ENCODE measurements at regions of chr6 and their contacts with region 1.

Region 1: GRCh38 chr6:45558858-45559257 is 181.1 kb upstream of the SUPT3H start:
- DNase-seq: no peak
- ATAC-seq: peak; percentile 90
- H3K4me3 Mint-ChIP-seq: peak overlapping the region; percentile 54
- H3K27ac Mint-ChIP-seq: peak overlapping the region; percentile 82
- H3K4me1 Mint-ChIP-seq: peaks cover 32% of the 10 kb centered on the region
- H3K27me3 Mint-ChIP-seq: peaks cover 3% of the 10 kb centered on the region

Region 2: DNA sequence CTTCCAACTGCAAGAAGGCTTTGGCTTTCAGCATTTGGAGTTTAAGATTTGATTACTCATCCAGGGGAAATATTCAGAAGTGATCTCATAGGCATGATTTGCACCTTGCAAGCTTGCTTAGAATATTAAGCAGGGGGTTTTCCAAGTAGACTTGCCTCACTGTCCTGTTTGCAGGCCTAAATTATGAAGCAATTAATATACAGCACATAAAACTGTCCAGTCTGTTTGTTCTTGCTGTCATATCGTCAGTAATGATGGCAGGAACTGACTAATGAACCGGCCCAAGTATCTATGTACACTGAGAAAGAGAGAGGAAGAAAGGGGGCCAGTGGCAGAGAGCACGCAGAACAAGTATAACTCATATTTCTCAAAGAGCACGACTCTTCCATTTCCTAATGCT is 31.4 kb after region 1 on chr6:
- CTCF ChIA-PET with region 1: no interaction called
- POLR2A ChIA-PET with region 1: no interaction called
- intact Hi-C with region 1: loop called in 1 of 2 experiments (anchors 1 kb)
- DNase-seq: no peak
- ATAC-seq: peak; percentile 40
- H3K4me3 Mint-ChIP-seq: no peak overlapping the region
- H3K27ac Mint-ChIP-seq: peak overlapping the region; percentile 80
- H3K4me1 Mint-ChIP-seq: peaks cover 81% of the 10 kb centered on the region
- H3K27me3 Mint-ChIP-seq: no peaks in the 10 kb centered on the region

Measured in activated CD4-positive, alpha-beta T cell treated with anti-CD3 and anti-CD28 coated beads for 36 hours (primary cell).